PC-9 (cell line): ENCODE measurements at regions of chr4 and their contacts with region 1.

Region 1: DNA sequence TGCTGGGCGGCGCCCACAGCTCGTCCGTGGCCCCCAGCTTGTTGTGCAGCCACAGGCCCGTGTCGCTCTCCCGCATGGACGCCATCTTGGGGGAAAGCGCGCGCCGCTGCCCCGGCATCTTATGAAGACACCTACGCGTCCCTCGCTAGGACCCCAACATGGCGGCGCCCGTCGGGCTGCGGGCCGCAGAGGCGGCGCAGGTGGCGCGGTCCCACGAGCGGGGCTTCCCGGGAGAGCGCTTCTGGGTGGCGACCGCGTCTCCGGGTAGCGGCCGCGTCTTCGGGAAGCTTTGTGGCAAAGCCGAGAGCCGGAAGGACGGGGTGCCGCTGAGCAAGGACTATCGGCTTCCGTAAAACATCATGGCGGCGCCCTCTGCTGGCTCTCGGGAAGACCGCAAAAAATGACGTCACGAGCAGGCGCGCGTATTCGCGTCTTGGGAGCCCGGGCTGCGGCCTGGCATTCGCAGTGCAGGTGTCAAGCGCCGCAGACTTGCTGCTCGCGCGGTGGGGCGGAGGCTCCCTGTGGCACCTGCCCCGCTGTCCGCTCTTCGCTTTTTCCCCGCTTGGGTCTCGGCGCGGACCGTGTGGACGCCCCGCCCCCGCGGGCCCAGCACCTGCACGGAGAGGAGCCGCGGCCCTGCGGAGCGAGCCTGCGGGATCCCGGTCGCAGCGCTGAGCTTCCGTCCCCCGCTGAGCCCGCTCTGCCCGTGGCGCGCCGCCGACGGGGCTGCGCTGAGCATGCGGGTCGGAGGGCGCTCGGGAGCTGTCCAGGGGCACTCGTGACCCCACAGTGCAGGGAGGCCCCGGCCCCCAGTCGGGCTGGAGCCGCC is at the start of gene NELFA:
- DNase-seq: peak; percentile 91 to 93
- H3K4me3 ChIP-seq: peak within 1 kb of the TSS; percentile 100
- H3K27ac ChIP-seq: peak within 1 kb of the TSS; percentile 97
- H3K4me1 ChIP-seq: peaks cover 17% of the 10 kb centered on the region
- H3K27me3 ChIP-seq: no peaks in the 10 kb centered on the region
- CTCF ChIP-seq: peak; percentile 71
- total RNA-seq, gene NELFA: 52.4 and 70.1 TPM in 2 replicates

Region 2: GRCh38 chr4:2116687-2117400 is 107.8 kb after region 1 on chr4:
- CTCF ChIA-PET with region 1: no interaction called
- POLR2A ChIA-PET with region 1: interaction called, 24 read pairs
- intact Hi-C with region 1: no loop called
- DNase-seq: no peak
- H3K4me3 ChIP-seq: no peak overlapping the region
- H3K27ac ChIP-seq: no peak overlapping the region
- H3K4me1 ChIP-seq: no peaks in the 10 kb centered on the region
- H3K27me3 ChIP-seq: no peaks in the 10 kb centered on the region
- CTCF ChIP-seq: no peak